ENCODE measurements at regions of chr6 and their contacts with region 1.

Region 1: GRCh38 chr6:148166339-148166968 is 176.2 kb upstream of the SASH1 start:
- DNase-seq: no peak
- H3K4me3 ChIP-seq: no peak overlapping the region
- H3K27ac ChIP-seq: no peak overlapping the region
- H3K4me1 ChIP-seq: no peaks in the 10 kb centered on the region
- H3K27me3 ChIP-seq: no peaks in the 10 kb centered on the region
- CTCF ChIP-seq: peak; percentile 54 to 72 (median 61)
- POLR2A ChIP-seq: no peak

Region 2: GRCh38 chr6:147506704-147507114 is 659.7 kb before region 1 on chr6:
- intact Hi-C with region 1: loop called (anchors 10 kb)
- DNase-seq: peak; percentile 61 to 66
- H3K4me3 ChIP-seq: peak overlapping the region; percentile 54 to 76
- H3K27ac ChIP-seq: no peak overlapping the region
- H3K4me1 ChIP-seq: peaks cover 0 to 4% of the 10 kb centered on the region in 2 donors
- H3K27me3 ChIP-seq: no peaks in the 10 kb centered on the region
- CTCF ChIP-seq: peak; percentile 73 to 86 (median 80)
- POLR2A ChIP-seq: no peak

Region 3: DNA sequence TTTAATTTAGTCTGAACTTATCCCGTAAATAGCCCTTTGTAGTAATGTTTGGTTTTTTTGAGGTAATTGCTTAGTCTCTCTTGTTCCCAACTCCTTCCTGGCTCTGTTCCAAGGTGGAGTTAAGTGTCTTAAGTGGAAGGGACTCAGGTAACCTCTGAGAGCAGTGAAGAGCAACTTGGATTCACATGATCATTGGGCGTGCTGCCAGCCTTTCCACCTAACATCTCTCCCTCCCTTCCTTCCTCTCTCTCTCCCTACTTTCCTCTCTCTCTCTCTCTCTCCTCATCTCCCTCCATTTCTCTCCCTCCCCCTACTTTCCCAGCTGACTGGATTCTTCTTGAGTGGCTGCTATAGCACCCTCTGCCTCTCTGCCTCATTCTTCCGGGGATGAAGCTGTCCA is 56.7 kb before region 1 on chr6:
- intact Hi-C with region 1: no loop called
- DNase-seq: no peak
- H3K4me3 ChIP-seq: no peak overlapping the region
- H3K27ac ChIP-seq: no peak overlapping the region
- H3K4me1 ChIP-seq: no peaks in the 10 kb centered on the region
- H3K27me3 ChIP-seq: no peaks in the 10 kb centered on the region
- CTCF ChIP-seq: no peak
- POLR2A ChIP-seq: no peak

Region 4: DNA sequence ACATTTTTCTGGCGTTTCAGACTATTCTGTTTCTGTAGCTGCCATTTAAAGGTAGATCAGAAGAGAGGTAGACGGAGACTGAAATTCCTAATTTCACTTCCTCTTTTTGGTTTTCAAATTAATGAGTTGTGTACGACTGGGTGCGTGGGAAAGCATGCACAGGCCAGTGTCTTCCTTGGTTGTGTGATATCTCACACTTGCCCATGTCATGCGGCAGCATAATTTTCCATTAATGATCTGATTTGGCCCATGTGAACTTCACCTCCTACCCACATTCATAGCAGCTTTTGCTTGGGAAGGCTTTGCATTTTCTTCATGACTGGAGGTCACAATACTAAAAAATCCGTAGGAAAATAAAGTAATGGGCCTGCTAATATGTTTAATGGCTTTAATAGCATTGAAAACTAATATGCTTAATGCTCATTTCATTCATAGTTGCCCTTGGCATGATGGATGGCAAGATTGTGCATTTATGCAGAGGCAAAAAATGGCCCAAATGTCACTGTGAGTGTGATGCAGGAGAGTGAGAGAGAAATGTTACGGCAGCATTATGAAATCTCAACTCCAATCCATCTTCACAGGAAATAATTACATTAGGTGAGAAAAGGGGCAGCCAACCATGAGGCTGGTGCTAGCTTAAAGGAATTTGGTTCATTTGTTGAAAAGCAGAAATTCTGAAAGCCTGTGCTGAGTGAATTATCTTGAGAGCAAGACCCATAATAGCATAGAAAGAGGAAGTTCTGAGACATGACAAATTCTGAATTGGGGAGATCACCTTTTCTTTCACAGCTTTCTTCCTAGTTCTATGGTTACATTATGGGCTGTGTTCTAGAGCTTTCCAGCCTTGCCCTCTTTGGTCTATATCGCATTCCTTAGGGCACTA is 511.4 kb after region 1 on chr6:
- intact Hi-C with region 1: no loop called
- DNase-seq: no peak
- H3K4me3 ChIP-seq: no peak overlapping the region
- H3K27ac ChIP-seq: no peak overlapping the region
- H3K4me1 ChIP-seq: no peaks in the 10 kb centered on the region
- H3K27me3 ChIP-seq: no peaks in the 10 kb centered on the region
- CTCF ChIP-seq: no peak
- POLR2A ChIP-seq: no peak